ENCODE measurements at regions of chr11 and their contacts with region 1.

Region 1: DNA sequence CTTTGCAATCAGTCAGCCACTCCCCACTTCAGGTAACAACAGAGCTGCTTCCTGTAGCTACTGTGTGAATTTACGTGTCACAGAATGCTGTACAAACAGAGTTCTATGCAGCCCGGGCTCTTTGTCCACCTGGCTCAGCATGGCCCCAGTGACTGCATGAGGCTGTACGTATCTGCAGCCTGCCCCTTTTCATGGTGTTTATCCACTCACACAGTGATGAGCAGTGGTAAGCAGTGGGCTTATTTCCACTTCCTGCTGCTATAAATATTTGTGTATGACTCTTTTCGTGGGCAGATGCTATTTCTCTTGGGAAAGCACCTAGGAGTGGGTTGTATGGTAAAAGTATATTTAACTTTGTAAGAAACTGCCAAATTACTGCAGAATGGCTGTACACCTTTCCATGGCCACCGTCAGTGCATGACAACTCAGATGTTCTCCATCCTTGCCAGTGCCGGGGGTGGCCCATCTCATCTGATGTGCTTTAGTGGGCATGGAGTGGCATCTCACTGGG is 43.3 kb downstream of the MYEOV start:
- DNase-seq: peak; percentile 26
- H3K4me3 Mint-ChIP-seq: peak overlapping the region; percentile 35
- H3K27ac Mint-ChIP-seq: peak overlapping the region; percentile 89
- H3K4me1 Mint-ChIP-seq: peaks cover 56% of the 10 kb centered on the region
- H3K27me3 Mint-ChIP-seq: peaks cover 4% of the 10 kb centered on the region

Region 2: DNA sequence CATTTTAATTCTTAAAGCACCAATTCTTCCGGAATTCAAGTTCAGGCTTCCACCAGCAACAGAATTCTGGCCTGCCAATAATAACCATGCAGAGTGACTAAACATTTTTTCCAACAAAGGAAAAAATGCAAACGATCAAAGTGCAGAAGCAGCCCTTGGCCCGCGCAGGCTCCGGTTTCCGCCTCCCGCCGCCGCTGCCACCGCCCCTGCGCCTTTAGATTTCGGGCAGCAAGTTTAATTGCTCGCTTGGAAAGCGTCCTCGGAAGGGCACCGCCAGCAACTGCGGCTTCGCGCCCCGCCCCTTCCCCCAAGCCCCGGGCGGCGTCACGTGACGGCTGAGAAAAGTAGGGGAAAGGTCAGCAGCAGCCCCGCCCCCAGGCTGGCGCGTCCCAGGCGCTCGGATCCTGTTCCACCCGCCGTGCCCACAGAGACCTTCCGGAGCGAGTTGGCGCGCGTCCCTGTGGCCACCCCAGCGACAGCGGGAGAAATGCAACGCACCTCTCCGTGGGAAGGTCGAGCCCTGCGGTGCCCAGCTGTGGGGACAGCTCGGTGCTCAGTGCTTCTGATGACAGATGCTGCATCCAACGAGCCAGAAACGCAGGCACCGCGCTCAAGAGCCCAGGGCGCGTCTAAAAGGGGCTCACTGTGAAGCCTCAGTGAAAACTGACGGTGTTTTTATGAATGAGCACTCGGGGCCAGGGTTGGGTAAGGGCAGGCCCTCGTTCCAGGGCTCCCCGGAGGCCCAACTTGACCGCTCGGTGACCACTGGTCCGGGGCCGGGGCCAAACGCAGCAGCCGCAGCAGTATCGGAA is 498.0 kb before region 1 on chr11:
- intact Hi-C with region 1: loop called (anchors 5 kb)
- DNase-seq: peak; percentile 85
- H3K4me3 Mint-ChIP-seq: peak overlapping the region; percentile 70
- H3K27ac Mint-ChIP-seq: peak overlapping the region; percentile 73
- H3K4me1 Mint-ChIP-seq: peaks cover 50% of the 10 kb centered on the region
- H3K27me3 Mint-ChIP-seq: peaks cover 2% of the 10 kb centered on the region

Region 3: GRCh38 chr11:69238573-69239351 is 98.5 kb before region 1 on chr11:
- intact Hi-C with region 1: loop called (anchors 1 kb)
- DNase-seq: no peak
- H3K4me3 Mint-ChIP-seq: peak overlapping the region; percentile 55
- H3K27ac Mint-ChIP-seq: peak overlapping the region; percentile 94
- H3K4me1 Mint-ChIP-seq: peaks cover 34% of the 10 kb centered on the region
- H3K27me3 Mint-ChIP-seq: peaks cover 6% of the 10 kb centered on the region

Region 4: GRCh38 chr11:69317401-69318092 is 19.7 kb before region 1 on chr11:
- intact Hi-C with region 1: loop called (anchors 1 kb)
- DNase-seq: no peak
- H3K4me3 Mint-ChIP-seq: peak overlapping the region; percentile 9
- H3K27ac Mint-ChIP-seq: peak overlapping the region; percentile 92
- H3K4me1 Mint-ChIP-seq: peaks cover 30% of the 10 kb centered on the region
- H3K27me3 Mint-ChIP-seq: no peaks in the 10 kb centered on the region

Region 5: DNA sequence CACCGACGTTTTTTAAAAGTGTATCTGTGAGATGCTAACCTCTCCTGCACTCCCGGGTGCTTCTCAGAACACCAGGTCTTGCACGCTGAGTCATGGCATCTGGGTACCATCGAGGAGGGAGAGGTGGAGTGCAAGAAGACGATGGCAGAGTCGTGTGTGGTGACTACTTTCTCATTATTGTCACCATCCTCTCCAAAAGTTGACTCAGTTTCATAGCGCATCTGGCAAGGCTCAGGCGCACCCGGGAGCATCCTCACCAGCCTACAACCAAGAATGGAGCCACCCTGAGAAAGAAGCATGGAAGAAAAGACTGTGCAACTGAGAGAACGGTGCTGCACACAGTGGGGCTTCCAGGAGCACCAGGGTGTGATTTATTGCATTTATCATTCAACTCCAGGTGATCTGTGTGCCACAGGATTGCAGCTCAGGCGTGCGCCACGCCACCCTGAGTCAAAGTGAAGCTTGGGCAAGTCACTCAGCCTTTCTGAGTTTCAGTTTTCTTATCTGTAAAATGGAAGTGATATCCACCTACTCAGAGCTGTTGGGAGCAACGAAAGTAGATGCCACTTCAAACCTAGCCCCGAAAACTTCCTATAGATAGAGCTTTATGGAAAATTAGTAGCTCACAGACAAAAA is 209.6 kb after region 1 on chr11:
- intact Hi-C with region 1: loop called (anchors 1 kb)
- DNase-seq: no peak
- H3K4me3 Mint-ChIP-seq: no peak overlapping the region
- H3K27ac Mint-ChIP-seq: no peak overlapping the region
- H3K4me1 Mint-ChIP-seq: peaks cover 10% of the 10 kb centered on the region
- H3K27me3 Mint-ChIP-seq: peaks cover 9% of the 10 kb centered on the region

Region 6: GRCh38 chr11:70202898-70203748 is 865.9 kb after region 1 on chr11 and contains the start of gene FADD:
- intact Hi-C with region 1: loop called (anchors 5 kb)
- DNase-seq: peak; percentile 89
- H3K4me3 Mint-ChIP-seq: peak within 1 kb of the TSS; percentile 99
- H3K27ac Mint-ChIP-seq: peak within 1 kb of the TSS; percentile 99
- H3K4me1 Mint-ChIP-seq: peaks cover 37% of the 10 kb centered on the region
- H3K27me3 Mint-ChIP-seq: peaks cover 9% of the 10 kb centered on the region
- total RNA-seq, gene FADD: 47.9 and 51.8 TPM in 2 replicates